Naive thymus-derived CD4-positive, alpha-beta T cell (primary cell): ENCODE measurements at regions of chr5 and their contacts with region 1.

Region 1: DNA sequence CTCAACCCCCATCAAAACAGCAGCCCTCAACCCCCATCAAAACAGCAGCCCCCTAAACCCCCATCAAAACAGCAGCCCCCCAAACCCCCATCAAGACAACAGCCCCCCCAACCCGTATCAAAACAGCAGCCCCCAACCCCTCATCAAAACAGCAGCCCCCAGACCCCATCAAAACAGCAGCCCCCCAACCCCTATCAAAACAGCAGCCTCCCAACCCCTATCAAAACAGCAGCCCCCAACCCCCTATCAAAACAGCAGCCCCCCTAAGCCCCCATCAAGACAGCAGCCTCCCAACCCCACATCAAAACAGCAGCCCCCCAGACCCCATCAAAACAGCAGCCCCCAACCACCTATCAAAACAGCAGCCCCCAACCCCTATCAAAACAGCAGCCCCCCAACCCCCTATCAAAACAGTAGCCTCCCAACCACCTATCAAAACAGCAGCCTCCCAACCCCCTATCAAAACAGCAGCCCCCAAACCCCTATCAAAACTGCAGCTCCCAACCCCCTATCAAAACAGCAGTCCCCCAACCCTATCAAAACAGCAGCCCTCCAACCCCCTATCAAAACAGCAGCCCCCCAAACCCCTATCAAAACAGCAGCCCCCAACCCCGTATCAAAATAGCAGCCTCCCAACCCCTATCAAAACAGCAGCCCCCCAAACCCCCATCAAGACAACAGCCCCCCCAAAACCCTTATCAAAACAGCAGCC is 1.2 kb downstream of the TPPP start:
- DNase-seq: no peak
- ATAC-seq: no peak
- H3K4me3 ChIP-seq: no peak overlapping the region
- H3K4me3 Mint-ChIP-seq: peak overlapping the region; percentile 27 to 81 (median 60)
- H3K27ac ChIP-seq: no peak overlapping the region
- H3K27ac Mint-ChIP-seq: no peak overlapping the region
- H3K4me1 ChIP-seq: no peaks in the 10 kb centered on the region
- H3K4me1 Mint-ChIP-seq: peaks cover 0 to 3% (median 0%) of the 10 kb centered on the region in 7 donors
- H3K27me3 ChIP-seq: no peaks in the 10 kb centered on the region
- H3K27me3 Mint-ChIP-seq: peaks cover 0 to 16% (median 4%) of the 10 kb centered on the region in 5 donors

Region 2: DNA sequence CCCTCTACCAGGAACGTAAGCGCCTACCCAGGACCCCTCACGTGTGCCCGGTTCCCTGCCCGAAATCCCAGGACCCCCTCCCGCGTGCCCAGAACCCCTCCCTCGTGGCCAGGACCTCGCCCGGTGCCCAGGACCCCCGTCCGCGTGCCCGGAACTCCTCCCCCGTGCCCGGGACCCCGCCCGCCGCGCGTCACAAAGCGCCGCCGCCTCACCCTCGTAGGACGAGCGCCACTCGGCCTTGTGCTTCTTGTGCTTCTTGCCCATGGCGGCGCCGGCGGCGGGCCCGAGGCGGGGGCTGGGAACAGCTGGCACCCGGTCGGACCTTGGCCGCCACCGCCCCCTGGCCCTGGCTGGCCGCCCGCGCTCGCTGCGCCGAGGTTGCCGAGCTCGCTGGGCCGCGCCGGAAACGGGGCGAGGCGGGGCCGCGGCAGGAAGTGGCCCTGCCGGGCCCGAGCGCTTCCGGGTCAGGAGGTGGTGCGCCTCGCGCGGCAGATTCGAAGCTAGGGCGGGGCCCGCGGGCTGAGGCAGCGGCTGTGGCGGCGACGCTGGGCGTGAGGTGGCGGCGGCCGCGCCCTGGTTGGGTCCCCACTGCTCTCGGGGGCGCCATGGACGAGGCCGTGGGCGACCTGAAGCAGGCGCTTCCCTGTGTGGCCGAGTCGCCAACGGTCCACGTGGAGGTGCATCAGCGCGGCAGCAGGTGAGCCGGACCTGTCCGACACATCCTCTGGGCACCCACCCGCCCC is 200.6 kb after region 1 on chr5 and contains the starts of genes BRD9 and TRIP13:
- CTCF ChIA-PET with region 1: no interaction called
- POLR2A ChIA-PET with region 1: no interaction called
- intact Hi-C with region 1: loop called (anchors 2 to 5 kb)
- DNase-seq: peak; percentile 77 to 90 (median 86)
- ATAC-seq: peak; percentile 98
- H3K4me3 ChIP-seq: peak within 1 kb of the TSS; percentile 84
- H3K4me3 Mint-ChIP-seq: peak within 1 kb of the TSS; percentile 79 to 93 (median 86)
- H3K27ac ChIP-seq: peak within 1 kb of the TSS; percentile 91
- H3K27ac Mint-ChIP-seq: peak within 1 kb of the TSS; percentile 69 to 92 (median 89)
- H3K4me1 ChIP-seq: peaks cover 10 to 14% of the 10 kb centered on the region in 2 donors
- H3K4me1 Mint-ChIP-seq: peaks cover 12 to 35% (median 28%) of the 10 kb centered on the region in 7 donors
- H3K27me3 ChIP-seq: no peaks in the 10 kb centered on the region
- H3K27me3 Mint-ChIP-seq: no peaks in the 10 kb centered on the region
- total RNA-seq, gene BRD9: 63.2 to 93.2 (median 82.2) TPM
- total RNA-seq, gene TRIP13: 0.39 to 23.5 (median 0.57) TPM in 4 of 5 experiments, not detected in the other

Region 3: DNA sequence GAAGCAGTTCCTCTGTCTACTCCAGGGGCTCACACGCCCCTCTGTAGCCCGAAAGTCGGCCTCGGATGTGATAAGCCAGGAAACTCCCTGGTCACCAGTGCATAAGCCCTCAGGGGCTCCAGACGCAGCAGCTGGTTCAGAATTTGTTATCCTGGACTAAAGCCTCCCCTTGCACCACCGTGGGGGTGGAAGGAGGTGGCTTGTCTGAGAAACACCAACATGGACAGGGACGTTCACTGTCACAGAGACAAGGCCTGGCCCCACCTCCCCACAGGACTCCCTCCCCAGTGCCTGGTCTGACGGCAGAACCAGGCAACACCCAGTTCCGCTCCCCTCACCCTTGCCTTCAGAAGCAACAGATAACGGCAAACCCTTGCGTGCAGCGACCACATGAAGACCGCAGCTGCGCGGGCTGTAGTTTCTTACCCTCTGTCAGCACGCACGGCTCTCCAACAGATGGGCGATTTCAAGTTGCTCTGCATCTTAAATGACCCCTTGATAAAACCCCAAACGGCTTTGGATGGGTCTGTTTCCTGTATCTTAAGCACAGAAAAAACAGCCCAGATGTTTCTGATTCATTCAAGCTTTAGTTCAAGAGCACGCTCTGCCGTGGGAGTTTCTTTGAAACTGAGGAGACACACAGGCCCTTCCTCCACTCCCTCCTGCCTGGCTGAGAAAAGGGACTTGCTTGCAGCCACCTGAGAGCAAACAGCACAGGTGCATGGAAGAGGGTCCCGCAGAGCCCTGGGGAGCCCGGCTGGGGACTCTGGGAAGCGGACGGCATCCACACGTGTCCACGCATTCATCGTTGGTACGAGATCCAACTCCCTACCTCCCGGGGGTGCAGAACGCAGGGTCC is 271.9 kb after region 1 on chr5:
- CTCF ChIA-PET with region 1: no interaction called
- POLR2A ChIA-PET with region 1: no interaction called
- intact Hi-C with region 1: no loop called
- DNase-seq: peak in 8 of 9 donors; percentile 43 to 71 (median 66)
- ATAC-seq: peak; percentile 92
- H3K4me3 ChIP-seq: peak overlapping the region; percentile 18
- H3K4me3 Mint-ChIP-seq: peak overlapping the region; percentile 78 to 97 (median 84)
- H3K27ac ChIP-seq: peak overlapping the region; percentile 27
- H3K27ac Mint-ChIP-seq: peak overlapping the region; percentile 65 to 98 (median 83)
- H3K4me1 ChIP-seq: peaks cover 5 to 19% of the 10 kb centered on the region in 2 donors
- H3K4me1 Mint-ChIP-seq: peaks cover 15 to 56% (median 24%) of the 10 kb centered on the region in 7 donors
- H3K27me3 ChIP-seq: peaks cover 0 to 10% of the 10 kb centered on the region in 2 donors
- H3K27me3 Mint-ChIP-seq: peaks cover 27 to 38% (median 36%) of the 10 kb centered on the region in 5 donors

Region 4: DNA sequence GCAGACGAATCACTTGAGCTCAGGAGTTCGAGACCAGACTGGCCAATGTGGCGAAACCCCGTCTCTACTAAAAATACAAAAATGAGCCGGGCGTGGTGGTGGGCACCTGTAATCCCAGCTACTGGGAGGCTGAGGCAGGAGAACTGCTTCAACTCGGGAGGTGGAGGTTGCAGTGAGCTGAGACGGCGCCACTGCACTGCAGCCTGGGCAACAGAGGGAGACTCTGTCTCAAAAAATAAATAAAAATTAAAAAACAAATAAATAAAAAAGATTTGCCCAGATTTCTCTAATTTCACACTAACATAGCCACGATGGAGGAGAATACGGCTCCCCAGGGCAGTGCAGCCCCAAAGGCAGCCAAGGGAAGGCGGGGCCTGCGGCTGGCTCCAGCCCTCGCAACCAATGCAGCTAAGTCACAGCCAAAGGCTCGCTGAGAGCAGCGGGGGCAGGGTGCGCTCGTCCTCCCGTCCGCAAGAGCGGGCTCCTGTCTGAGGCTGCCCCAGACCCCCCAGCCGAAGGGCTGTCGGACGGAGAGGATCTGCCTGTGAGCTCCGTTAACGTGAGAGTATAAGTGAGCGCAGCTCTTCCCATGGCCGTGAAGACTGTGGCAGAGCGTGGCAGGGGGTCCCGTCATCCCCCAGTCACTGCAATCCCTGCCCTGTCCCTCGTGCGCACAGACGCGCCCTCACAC is 376.4 kb after region 1 on chr5:
- CTCF ChIA-PET with region 1: no interaction called
- POLR2A ChIA-PET with region 1: no interaction called
- intact Hi-C with region 1: no loop called
- DNase-seq: no peak
- ATAC-seq: no peak
- H3K4me3 ChIP-seq: no peak overlapping the region
- H3K4me3 Mint-ChIP-seq: no peak overlapping the region
- H3K27ac ChIP-seq: no peak overlapping the region
- H3K27ac Mint-ChIP-seq: no peak overlapping the region
- H3K4me1 ChIP-seq: no peaks in the 10 kb centered on the region
- H3K4me1 Mint-ChIP-seq: peaks cover 0 to 2% (median 0%) of the 10 kb centered on the region in 7 donors
- H3K27me3 ChIP-seq: no peaks in the 10 kb centered on the region
- H3K27me3 Mint-ChIP-seq: no peaks in the 10 kb centered on the region